Psoas muscle (tissue), 8 donors: ENCODE measurements at regions of chr4 and their contacts with region 1.

Region 1: DNA sequence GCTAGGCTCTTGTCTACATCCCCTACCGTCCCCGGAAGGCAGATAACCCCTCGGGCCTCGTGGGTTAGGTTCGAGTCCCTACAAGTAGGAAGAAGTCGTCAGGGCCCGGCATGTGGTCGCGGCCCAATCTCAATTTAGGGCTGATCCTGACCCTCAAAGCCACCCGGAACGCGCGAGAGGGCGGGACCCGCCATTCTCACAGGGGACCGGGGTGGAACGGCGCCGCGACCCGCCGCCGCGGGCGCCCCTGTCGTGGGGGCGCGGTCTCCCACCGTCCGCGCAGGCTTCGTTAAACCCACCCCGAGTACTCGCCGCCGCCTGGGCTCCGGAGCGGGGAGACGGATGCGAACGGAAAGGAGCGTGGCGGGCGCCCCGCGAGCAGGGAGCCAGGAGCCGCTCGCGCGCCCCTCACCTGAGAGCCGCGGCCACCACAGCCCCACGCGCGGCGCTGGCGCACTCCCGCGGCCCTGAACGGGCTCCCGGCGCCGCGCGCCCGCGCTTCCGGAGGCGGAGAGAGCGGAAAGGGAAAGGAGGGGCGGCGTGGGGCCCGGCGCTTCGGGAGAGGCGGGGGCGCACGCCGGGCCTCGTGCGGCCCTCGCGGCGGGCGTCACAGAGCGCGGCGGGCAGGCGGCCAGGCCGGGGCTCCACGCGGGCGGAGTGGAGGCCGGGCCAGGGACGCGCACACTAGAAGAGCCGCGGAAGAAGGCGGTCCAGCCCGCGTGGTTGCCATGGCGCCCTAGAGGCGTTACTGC is at the start of gene CFAP97:
- DNase-seq: peak; percentile 94
- ATAC-seq: peak; percentile 88 to 92 (median 90)
- H3K4me3 ChIP-seq: peak within 1 kb of the TSS; percentile 93
- H3K27ac ChIP-seq: peak within 1 kb of the TSS; percentile 99
- H3K4me1 ChIP-seq: peaks cover 14% of the 10 kb centered on the region
- H3K27me3 ChIP-seq: no peaks in the 10 kb centered on the region
- CTCF ChIP-seq: no peak
- total RNA-seq, gene CFAP97: 10.1 to 20.3 (median 11.3) TPM

Region 2: DNA sequence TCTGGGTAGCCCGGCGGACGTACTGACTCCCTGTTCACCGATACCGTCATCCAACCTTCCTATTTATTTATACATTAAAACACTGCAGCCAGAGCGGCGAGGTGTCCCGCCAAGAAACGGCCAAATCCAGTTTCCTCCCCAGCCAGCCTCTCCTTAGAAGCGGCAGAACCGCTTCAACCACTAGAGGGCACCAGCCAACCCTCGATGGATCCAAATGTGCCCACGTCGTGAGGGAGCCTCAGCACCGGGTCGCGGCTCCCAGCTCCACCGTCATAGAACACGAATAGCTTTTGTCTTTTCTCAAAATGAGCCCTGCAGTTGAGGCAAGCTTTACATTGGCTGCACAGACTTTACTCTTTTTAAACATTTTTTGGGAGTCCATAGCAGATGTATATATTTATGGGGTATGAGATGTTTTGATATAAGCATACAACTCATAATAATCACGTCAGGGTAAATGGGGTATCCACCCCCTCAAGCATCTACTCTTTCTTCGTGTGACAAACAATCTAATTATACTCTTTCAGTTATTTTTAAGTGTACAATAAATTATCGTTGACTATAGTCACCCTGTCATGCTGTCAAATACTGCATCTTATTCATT is 198.3 kb before region 1 on chr4:
- intact Hi-C with region 1: no loop called
- DNase-seq: peak; percentile 80 to 90
- ATAC-seq: peak; percentile 93 to 99 (median 96)
- H3K4me3 ChIP-seq: peak overlapping the region; percentile 53
- H3K27ac ChIP-seq: no peak overlapping the region
- H3K4me1 ChIP-seq: no peaks in the 10 kb centered on the region
- H3K27me3 ChIP-seq: peaks cover 0 to 16% (median 3%) of the 10 kb centered on the region in 3 donors
- CTCF ChIP-seq: peak; percentile 95

Region 3: GRCh38 chr4:185425647-185426352 is 222.1 kb after region 1 on chr4 and contains the start of gene UFSP2:
- intact Hi-C with region 1: no loop called
- DNase-seq: peak; percentile 89 to 95
- ATAC-seq: peak; percentile 95 to 97 (median 96)
- H3K4me3 ChIP-seq: peak within 1 kb of the TSS; percentile 96
- H3K27ac ChIP-seq: peak within 1 kb of the TSS; percentile 96
- H3K4me1 ChIP-seq: peaks cover 35% of the 10 kb centered on the region
- H3K27me3 ChIP-seq: no peaks in the 10 kb centered on the region
- CTCF ChIP-seq: no peak
- total RNA-seq, gene UFSP2: 32.1 to 45.5 (median 41.4) TPM

Region 4: DNA sequence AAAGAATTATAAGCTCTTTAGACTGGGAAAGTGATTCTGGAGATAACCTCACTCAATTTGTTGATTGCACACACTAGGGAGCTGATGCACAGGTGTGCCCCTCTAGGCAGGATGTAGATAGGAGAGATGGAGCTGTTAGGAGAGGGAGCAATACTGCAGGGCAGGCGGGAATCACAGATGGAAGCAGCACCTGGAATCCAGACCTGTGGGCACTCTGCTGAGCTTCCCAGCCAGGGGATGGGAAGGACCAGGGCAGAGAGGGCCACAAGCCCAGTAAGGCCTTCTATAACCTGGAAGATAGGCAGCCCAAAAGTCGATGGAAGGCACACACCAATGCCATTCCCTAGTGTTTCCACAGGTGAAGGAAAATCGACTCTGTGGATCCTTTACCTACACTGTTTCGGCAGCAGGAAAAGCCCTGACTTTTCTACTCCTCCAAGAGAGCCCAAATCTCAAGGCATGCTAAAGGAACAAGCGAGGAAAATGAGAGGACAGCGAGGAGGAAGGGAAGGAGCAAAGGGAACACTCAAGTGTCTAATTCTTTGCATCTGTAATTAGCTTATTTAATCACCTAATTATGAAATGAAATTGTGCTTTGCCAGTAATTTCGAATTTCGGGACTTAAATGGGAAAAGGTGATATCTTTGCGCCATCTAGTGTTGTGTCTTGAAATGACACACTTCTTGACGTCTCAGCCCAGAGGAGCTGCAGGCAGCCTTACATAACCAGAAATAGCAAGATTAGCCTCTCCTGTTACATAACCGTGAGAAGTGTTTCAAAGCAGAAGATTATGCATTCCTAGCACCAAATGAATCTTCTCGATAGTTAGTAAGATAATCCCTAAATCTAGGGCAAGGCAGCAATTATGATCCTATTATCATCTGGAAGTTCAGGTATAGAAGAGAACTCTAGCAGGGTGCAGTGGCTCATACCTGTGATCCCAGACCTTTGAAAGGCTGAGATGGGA is 834.3 kb after region 1 on chr4:
- intact Hi-C with region 1: loop called in 1 of 2 experiments (anchors 10 kb)
- DNase-seq: no peak
- ATAC-seq: peak; percentile 73 to 95 (median 81)
- H3K4me3 ChIP-seq: no peak overlapping the region
- H3K27ac ChIP-seq: no peak overlapping the region
- H3K4me1 ChIP-seq: no peaks in the 10 kb centered on the region
- H3K27me3 ChIP-seq: no peaks in the 10 kb centered on the region
- CTCF ChIP-seq: peak; percentile 90